PC-9 (cell line): ENCODE measurements at regions of chr3 and their contacts with region 1.

Region 1: DNA sequence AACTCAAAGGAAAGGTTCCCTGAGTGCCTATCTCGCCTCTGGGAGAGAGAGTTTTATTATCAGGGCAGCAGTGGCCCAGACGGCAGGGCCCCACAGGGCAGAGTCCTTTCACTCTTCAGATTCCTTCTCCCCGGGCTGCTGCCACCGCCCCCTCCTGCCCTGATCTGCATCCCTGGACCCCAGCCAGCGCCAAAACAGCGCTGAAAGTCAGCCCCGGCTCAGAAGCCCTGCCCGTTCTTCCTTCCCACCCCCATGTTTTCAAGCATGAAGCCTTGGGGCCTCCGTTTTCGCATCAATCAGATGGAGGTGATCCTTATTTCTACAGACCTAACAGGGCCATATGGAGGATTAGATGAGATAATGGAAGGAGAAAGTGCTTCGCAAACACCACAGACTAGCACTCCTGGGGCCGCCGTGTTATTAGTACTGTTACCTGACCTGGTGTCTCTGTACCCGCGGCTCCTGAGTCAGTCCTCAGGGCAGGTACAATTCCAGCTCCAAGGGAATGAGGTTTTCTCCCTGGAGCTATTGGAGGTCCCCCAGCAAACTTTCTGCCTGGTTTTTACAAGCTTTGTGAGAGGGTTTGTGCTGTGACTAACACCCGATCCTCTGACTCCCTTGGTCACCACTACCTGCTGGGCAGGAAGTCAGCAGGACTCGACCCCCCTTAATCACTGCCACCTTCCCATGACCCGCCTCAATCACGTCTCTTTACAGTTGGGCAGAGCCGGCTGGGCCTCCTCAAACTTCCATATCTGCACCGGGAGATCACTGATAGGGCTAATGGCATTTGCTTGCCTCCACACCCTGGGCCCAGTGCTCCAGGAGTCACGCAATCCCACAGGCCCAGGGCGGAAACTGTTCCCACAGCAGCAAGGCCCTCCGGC is 39.5 kb upstream of the TSEN2 start:
- DNase-seq: peak; percentile 92 to 99
- H3K4me3 ChIP-seq: peak overlapping the region; percentile 47
- H3K27ac ChIP-seq: peak overlapping the region; percentile 100
- H3K4me1 ChIP-seq: peaks cover 76% of the 10 kb centered on the region
- H3K27me3 ChIP-seq: no peaks in the 10 kb centered on the region
- CTCF ChIP-seq: no peak

Region 2: DNA sequence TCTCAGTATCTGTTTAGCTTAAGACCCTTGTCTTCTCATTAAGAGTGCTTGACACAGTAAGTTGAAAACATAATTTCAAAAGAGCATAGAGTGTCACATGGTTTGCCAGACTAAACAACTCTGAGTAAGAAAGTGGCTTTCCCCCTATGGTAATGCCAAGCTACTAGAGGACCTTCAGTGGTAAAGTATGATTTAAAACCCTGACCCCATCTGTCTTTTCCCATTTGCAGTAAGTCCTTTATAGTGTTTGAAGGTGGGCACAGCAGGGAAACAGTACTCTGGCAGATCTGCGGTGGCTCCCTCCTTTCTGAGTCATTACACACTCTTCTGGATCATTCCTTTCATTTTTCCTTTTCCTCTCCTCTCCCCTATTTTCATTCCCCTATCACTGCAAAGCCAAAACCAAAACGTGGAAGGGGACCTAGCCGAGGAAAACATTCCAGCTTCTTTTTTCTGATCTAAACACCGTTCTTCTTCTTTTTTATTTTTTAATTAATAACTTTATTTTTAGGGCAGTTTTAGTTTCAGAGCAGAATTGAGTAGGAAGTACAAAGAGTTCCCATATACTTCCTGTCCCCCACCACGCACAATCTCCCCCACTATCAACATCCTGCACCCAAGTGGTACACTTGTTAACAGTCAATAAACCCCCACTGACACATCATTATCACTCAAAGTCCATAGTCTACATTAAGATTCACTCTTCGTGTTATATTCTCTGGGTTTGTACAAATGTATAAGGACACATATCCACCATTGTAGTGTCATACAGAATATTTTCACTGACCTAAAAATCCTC is 81.2 kb before region 1 on chr3:
- CTCF ChIA-PET with region 1: no interaction called
- POLR2A ChIA-PET with region 1: no interaction called
- intact Hi-C with region 1: no loop called
- DNase-seq: no peak
- H3K4me3 ChIP-seq: no peak overlapping the region
- H3K27ac ChIP-seq: 0 out of 2 replicates have a peak overlapping the region, but pooled peaks have one; percentile 14
- H3K4me1 ChIP-seq: no peaks in the 10 kb centered on the region
- H3K27me3 ChIP-seq: no peaks in the 10 kb centered on the region
- CTCF ChIP-seq: no peak

Region 3: DNA sequence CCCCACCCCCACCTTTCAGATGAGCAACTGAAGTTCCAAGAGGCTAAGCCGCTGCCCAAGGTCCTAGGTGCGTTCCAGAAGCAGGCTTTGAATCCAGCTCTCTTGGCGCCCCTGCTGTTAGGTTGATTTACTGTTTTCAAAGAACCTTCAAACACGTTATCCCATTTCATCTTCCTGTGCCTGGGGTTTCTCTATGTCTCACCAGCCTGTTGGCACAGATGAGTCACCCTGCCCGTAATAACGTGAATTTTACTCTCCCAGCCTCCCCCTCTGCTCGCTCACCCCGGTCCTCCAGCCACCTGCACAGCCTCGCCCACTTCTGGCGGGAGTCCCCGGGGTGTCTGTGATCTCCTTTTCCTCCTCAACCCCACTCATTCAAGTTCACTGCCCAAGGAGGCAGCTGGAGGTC is 26.4 kb after region 1 on chr3:
- CTCF ChIA-PET with region 1: interaction called, 3 read pairs
- POLR2A ChIA-PET with region 1: interaction called, 6 read pairs
- intact Hi-C with region 1: loop called (anchors 1 kb)
- DNase-seq: peak; percentile 76 to 92
- H3K4me3 ChIP-seq: no peak overlapping the region
- H3K27ac ChIP-seq: peak overlapping the region; percentile 92
- H3K4me1 ChIP-seq: peaks cover 66% of the 10 kb centered on the region
- H3K27me3 ChIP-seq: no peaks in the 10 kb centered on the region
- CTCF ChIP-seq: peak; percentile 64

Region 4: GRCh38 chr3:12478326-12478725 is 33.5 kb after region 1 on chr3:
- CTCF ChIA-PET with region 1: interaction called, 3 read pairs
- POLR2A ChIA-PET with region 1: interaction called, 14 read pairs
- intact Hi-C with region 1: loop called (anchors 2 kb)
- DNase-seq: no peak
- H3K4me3 ChIP-seq: no peak overlapping the region
- H3K27ac ChIP-seq: peak overlapping the region; percentile 82
- H3K4me1 ChIP-seq: peaks cover 61% of the 10 kb centered on the region
- H3K27me3 ChIP-seq: no peaks in the 10 kb centered on the region
- CTCF ChIP-seq: no peak